Activated CD4-positive, alpha-beta T cell treated with anti-CD3 and anti-CD28 coated beads, Interleukin-2, amount 10 ng/mL, durations not matched to agents 7 days and 5 days (primary cell): ENCODE measurements at regions of chr2 and their contacts with region 1.

Region 1: GRCh38 chr2:135985018-135985825 is at the start of gene DARS1:
- DNase-seq: peak; percentile 80
- H3K4me3 Mint-ChIP-seq: peak within 1 kb of the TSS; percentile 92
- H3K27ac Mint-ChIP-seq: peak within 1 kb of the TSS; percentile 96
- H3K4me1 Mint-ChIP-seq: peaks cover 62% of the 10 kb centered on the region
- H3K27me3 Mint-ChIP-seq: no peaks in the 10 kb centered on the region
- total RNA-seq, gene DARS1: 90.8 to 90.9 TPM

Region 2: DNA sequence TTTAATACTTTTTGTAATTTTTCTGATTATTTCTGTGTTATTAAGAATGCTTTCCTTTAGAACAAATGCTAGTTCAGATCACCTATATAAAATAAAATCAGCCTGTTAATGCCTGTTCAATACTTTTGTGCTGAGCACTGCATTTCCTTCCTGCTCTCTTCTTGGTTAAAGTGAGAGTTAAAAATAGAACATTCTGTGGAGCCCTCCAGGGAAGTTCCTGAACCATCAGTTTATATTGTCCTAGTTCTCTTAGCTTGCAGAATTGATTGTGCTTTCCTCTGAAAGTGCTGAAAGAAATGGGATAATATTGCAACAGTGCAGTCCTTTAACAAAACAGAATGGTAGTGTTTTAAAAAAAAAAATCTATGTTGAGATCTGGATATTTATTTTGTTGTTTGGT is 318.2 kb before region 1 on chr2:
- CTCF ChIA-PET with region 1: no interaction called
- POLR2A ChIA-PET with region 1: no interaction called
- DNase-seq: no peak
- H3K4me3 Mint-ChIP-seq: no peak overlapping the region
- H3K27ac Mint-ChIP-seq: no peak overlapping the region
- H3K4me1 Mint-ChIP-seq: peaks cover 26% of the 10 kb centered on the region
- H3K27me3 Mint-ChIP-seq: no peaks in the 10 kb centered on the region

Region 3: DNA sequence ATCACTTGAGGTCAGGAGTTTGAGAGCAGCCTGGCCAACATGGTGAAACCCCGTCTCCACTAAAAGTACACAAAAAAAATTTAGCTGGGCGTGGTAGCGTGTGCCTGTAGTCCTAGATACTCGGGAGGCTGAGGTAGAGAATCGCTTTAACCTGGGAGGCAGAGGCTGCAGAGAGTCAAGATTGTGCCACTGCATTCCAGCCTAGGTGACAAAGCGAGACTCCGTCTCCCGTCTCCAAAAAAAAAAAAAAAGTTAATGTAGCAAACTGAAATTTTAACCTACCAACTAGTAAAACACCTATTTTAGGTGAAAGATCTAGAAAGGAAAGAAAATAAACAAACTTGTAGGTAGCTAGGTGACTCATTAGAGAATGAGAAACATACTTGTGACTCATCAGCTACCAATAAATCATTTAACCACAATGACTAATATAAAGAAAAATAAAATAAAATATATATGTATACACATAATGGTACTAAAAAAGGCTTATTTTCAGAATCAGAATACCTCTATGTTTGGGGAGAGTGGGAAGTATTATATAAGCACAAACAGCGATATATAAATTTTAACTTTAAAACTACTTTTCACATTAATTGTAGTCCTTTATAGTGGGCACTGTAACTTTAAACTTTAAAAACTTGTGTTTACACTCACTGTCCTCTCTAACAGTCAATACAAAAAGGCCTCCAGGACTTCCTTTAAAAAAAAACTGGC is 36.4 kb before region 1 on chr2:
- CTCF ChIA-PET with region 1: interaction called, 3 read pairs
- POLR2A ChIA-PET with region 1: interaction called, 18 read pairs
- DNase-seq: no peak
- H3K4me3 Mint-ChIP-seq: peak overlapping the region; percentile 32
- H3K27ac Mint-ChIP-seq: peak overlapping the region; percentile 73
- H3K4me1 Mint-ChIP-seq: peaks cover 37% of the 10 kb centered on the region
- H3K27me3 Mint-ChIP-seq: no peaks in the 10 kb centered on the region

Region 4: GRCh38 chr2:135997380-135997779 is 12.2 kb after region 1 on chr2:
- CTCF ChIA-PET with region 1: interaction called, 12 read pairs
- POLR2A ChIA-PET with region 1: no interaction called
- DNase-seq: no peak
- H3K4me3 Mint-ChIP-seq: no peak overlapping the region
- H3K27ac Mint-ChIP-seq: no peak overlapping the region
- H3K4me1 Mint-ChIP-seq: peaks cover 30% of the 10 kb centered on the region
- H3K27me3 Mint-ChIP-seq: no peaks in the 10 kb centered on the region